Endothelial cell of umbilical vein (primary cell): ENCODE measurements at regions of chr17 and their contacts with region 1.

Region 1: DNA sequence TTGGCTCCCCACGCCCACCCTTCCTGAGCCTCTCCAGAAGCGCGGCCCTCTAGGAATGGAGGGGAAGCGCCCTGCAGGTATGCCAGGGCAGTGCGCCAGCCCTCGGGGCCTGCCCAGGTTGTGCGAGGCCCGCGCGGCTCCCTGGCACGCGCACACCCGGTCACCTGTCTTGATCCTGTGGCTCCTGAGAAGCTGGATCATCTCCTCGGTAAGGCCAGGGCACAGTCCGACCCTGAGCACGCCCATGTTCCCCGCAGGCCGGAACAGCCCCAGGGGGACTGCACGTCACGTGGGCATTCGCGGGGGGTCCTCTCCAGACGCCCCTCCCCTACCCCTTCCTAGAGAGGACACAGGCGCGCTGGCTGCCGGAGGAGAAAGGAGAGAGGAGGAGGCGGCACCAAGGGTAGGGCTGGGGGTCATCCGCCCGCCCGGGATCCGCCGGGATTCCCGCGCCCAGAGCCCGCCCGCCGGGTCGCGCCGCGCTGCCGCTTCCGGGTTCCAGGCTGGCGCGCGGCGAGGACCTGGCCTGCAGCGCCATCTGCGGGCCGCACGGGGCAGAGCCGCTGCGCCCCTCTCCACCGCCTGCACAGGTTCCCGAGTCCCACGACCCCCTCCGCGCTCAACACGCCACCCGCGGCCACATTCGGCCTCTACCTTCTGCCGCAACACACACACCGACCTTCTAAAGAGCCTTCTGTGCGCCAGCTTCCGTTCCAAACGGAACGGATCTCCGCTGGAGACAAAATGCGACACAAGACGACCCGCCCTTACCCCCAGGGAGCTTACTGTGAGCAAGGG is at the start of gene RAD51D:
- DNase-seq: peak; percentile 75
- H3K4me3 ChIP-seq: peak within 1 kb of the TSS; percentile 39 to 83 (median 45)
- H3K27ac ChIP-seq: peak within 1 kb of the TSS; percentile 56
- H3K4me1 ChIP-seq: peaks cover 13% of the 10 kb centered on the region
- H3K27me3 ChIP-seq: no peaks in the 10 kb centered on the region
- CTCF ChIP-seq: peak; percentile 89 to 95
- POLR2A ChIP-seq: peak; percentile 65
- total RNA-seq, gene RAD51D: 19.6 and 27.9 TPM in 2 replicates

Region 2: DNA sequence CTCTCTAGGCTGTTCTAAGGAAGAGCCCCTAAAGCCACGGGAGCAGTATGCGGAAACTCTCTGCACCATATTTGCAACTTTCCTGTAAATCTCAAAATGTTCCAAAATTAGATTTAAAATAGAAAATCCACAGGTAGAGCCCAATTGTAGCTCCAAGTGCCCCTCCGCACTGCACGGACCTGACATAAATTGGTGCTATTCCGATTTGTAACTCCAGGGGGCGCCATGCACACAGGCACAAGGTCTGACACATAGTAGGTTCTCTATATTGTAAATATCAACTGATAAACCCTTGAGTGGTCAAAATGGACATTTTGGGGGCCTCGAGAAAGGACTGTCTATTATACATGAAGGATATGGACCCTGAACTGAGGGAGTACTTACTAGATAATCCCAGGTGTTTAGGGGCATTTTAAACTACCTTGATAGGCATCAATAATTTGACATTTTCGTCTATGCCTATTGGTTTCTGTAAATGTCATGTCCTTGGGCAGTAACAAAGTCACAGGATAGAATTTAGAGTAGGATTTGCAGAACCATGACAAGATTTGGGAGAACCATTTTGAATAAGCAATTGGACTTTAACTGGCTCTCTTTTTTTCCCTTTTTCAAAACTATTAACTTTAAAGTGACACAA is 576.7 kb before region 1 on chr17:
- CTCF ChIA-PET with region 1: interaction called, 100 read pairs
- POLR2A ChIA-PET with region 1: interaction called, 5 read pairs
- dilution Hi-C with region 1: no loop called
- intact Hi-C with region 1: loop called (anchors 1 kb)
- DNase-seq: peak; percentile 25
- H3K4me3 ChIP-seq: no peak overlapping the region
- H3K27ac ChIP-seq: no peak overlapping the region
- H3K4me1 ChIP-seq: no peaks in the 10 kb centered on the region
- H3K27me3 ChIP-seq: no peaks in the 10 kb centered on the region
- CTCF ChIP-seq: peak; percentile 71 to 82
- POLR2A ChIP-seq: no peak

Region 3: DNA sequence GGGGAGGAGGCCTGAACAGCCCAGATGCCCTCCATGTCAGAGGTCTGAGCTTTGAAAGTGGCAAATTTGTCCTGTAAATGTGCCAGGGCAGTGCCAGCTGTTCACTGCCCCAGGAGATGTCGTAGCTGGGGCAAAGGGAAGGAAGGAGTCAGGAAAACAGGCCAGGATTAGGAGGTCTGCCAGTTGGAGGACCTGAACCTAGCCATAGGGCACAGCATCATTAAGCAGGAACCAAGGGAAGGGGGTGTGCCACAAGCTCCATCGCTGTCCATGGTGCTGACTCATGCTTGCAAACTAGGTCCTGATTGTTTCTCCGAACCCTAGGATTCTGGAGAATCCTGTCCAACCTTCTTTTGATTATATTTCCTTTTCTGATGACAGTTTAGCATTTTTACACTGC is 416.0 kb before region 1 on chr17:
- CTCF ChIA-PET with region 1: no interaction called
- POLR2A ChIA-PET with region 1: no interaction called
- dilution Hi-C with region 1: no loop called
- intact Hi-C with region 1: no loop called
- DNase-seq: peak; percentile 24
- H3K4me3 ChIP-seq: no peak overlapping the region
- H3K27ac ChIP-seq: no peak overlapping the region
- H3K4me1 ChIP-seq: no peaks in the 10 kb centered on the region
- H3K27me3 ChIP-seq: no peaks in the 10 kb centered on the region
- CTCF ChIP-seq: no peak
- POLR2A ChIP-seq: no peak

Region 4: DNA sequence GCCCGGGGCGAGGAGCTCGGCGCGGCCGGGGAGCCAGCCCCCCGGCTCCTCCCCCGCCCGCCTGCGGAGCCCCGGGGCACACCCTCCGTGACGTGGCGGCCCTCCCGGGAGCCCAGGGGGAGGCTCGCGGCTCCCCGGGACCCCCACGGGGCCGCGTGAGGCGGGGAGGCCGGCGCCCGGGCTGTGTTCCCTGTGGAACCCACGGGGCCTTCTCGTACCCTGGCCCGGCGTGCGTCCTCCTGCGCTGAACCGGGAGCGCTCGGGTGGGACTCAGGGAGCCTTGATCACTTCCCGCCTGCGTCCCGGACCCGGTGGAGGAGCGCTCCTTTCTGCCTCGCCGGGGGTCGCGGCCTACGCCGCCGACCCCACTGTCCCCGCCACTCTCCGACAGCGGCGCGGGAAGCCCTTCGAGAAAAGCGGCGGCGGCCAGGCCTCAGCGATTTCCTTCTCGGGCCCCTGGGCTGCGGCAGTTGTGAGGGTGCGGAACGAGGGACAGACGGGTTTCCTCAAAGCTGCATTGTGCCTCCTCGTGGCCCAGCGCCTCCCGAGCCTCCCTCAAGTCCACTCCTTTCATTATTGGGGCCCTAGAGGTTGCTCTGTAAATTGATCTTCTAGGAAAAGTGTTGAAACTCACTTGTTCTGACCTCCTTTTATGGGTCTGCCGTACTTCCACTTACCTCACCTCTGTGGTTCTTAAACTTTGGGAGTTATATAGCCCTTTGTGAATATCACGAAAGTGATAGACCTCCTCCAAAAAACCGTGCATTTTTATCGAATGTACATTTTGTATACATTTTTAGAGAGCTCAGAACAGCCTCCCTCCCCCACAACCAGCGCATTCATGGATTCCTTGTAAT is 138.7 kb before region 1 on chr17:
- CTCF ChIA-PET with region 1: interaction called, 6 read pairs
- POLR2A ChIA-PET with region 1: interaction called, 3 read pairs
- dilution Hi-C with region 1: loop called (anchors 25 kb)
- intact Hi-C with region 1: no loop called
- DNase-seq: peak; percentile 80
- H3K4me3 ChIP-seq: peak overlapping the region; percentile 65 to 92 (median 89)
- H3K27ac ChIP-seq: peak overlapping the region; percentile 96
- H3K4me1 ChIP-seq: peaks cover 19% of the 10 kb centered on the region
- H3K27me3 ChIP-seq: no peaks in the 10 kb centered on the region
- CTCF ChIP-seq: peak in 1 of 2 donors; percentile 51
- POLR2A ChIP-seq: peak; percentile 80

Region 5: DNA sequence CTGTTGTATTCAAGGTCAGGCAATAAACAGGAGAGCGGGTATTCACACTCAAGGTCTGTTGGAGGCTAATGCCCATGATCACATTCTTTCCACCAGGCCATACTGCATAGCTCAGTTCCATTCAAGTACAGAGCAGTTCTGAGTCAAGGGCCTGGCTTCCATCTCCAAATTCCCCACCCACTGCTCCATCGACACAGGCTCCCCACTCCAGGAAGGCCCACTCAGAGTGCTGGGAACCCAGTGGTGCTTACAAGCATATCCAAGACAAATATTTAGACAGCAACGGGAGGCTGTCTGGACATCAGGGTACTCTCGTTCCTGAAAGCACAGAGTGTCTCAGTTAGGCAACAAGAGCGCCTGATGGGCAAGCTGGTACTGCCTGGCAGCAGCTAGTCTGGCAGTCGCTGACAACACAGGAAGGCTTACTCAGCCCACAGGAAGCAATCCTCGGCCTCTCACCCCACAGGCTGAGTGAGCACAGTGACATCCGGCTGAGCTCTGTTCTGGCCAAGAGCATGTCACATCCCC is 97.0 kb before region 1 on chr17:
- CTCF ChIA-PET with region 1: interaction called, 12 read pairs
- POLR2A ChIA-PET with region 1: no interaction called
- dilution Hi-C with region 1: no loop called
- intact Hi-C with region 1: loop called (anchors 1 kb)
- DNase-seq: peak; percentile 95
- H3K4me3 ChIP-seq: peak overlapping the region in 1 of 3 experiments; percentile 4
- H3K27ac ChIP-seq: peak overlapping the region; percentile 91
- H3K4me1 ChIP-seq: peaks cover 23% of the 10 kb centered on the region
- H3K27me3 ChIP-seq: no peaks in the 10 kb centered on the region
- CTCF ChIP-seq: peak; percentile 8 to 12
- POLR2A ChIP-seq: peak; percentile 57

Region 6: DNA sequence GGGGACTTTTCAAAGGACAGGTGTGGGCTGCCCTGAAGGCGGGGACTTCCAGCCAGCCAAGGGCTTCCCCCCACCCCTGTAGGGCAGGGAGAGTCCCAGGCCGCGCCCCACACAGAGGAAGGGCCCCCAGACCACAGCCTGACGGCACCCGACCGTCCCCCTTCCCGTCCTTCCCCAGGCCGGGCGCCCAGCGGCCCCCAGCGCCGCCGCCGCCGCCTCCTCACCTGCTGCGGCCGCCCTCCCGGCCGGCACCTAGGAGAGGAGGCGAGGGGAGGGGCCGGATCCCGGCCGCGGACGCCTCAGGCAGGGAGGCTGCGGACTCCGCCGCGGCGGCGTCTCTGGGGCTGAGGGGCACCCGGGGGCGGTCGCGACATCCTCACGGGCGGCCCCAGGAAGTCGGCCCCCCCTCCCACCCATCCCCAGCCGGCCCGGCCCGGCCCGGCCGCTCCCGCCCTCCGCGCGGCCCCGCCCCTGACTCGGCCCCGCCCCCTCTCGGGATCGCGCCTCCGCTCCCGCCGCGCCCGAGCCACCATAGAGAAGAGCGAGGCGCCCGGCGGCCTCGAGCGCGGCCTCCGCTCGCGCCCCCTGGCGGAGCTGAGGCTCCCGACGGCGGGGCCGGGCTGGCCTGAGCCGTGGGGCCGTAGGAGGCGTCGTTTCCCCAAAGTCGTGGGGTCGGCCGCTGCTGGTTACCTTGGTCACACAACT is 30.5 kb before region 1 on chr17:
- CTCF ChIA-PET with region 1: interaction called, 20 read pairs
- POLR2A ChIA-PET with region 1: no interaction called
- dilution Hi-C with region 1: no loop called
- intact Hi-C with region 1: loop called (anchors 1 kb)
- DNase-seq: peak; percentile 73
- H3K4me3 ChIP-seq: peak overlapping the region; percentile 65 to 81 (median 71)
- H3K27ac ChIP-seq: peak overlapping the region; percentile 72
- H3K4me1 ChIP-seq: peaks cover 22% of the 10 kb centered on the region
- H3K27me3 ChIP-seq: no peaks in the 10 kb centered on the region
- CTCF ChIP-seq: peak; percentile 76 to 77
- POLR2A ChIP-seq: peak; percentile 45